Prostate gland (tissue), 2 donors: ENCODE measurements at regions of chr5 and their contacts with region 1.

Region 1: DNA sequence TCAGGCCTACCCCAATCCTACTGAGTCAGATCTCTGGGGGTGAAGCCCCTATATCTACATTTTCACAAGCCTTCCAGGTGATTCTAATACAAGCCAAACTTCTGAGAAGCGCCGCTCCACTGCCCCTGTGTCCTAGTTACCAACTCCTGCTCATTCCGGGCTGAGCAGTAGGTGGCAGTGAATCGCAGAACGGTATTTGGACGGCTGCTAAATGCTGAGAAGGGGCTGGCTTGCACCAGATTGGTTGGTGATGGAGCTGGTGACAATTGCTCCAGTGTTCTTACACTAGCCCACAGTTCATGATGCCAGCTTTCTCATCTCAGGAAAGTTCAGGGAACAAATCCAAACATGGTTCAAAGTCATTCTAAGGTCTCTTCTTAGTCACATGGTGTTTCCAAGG is 31.1 kb upstream of the FGF1 start:
- DNase-seq: peak; percentile 49
- H3K4me3 ChIP-seq: no peak overlapping the region
- H3K27ac ChIP-seq: no peak overlapping the region
- H3K4me1 ChIP-seq: no peaks in the 10 kb centered on the region
- H3K27me3 ChIP-seq: no peaks in the 10 kb centered on the region
- CTCF ChIP-seq: peak in 2 of 4 experiments; percentile 47 to 53
- POLR2A ChIP-seq: no peak

Region 2: GRCh38 chr5:142869883-142870282 is 152.9 kb after region 1 on chr5:
- intact Hi-C with region 1: loop called (anchors 5 kb)
- DNase-seq: peak; percentile 76
- H3K4me3 ChIP-seq: no peak overlapping the region
- H3K27ac ChIP-seq: peak overlapping the region; percentile 32 to 43
- H3K4me1 ChIP-seq: peaks cover 11% of the 10 kb centered on the region
- H3K27me3 ChIP-seq: no peaks in the 10 kb centered on the region
- CTCF ChIP-seq: no peak
- POLR2A ChIP-seq: no peak

Region 3: GRCh38 chr5:142881076-142881783 is 164.3 kb after region 1 on chr5:
- intact Hi-C with region 1: loop called (anchors 2 kb)
- DNase-seq: no peak
- H3K4me3 ChIP-seq: no peak overlapping the region
- H3K27ac ChIP-seq: no peak overlapping the region
- H3K4me1 ChIP-seq: no peaks in the 10 kb centered on the region
- H3K27me3 ChIP-seq: no peaks in the 10 kb centered on the region
- CTCF ChIP-seq: no peak
- POLR2A ChIP-seq: no peak